ENCODE measurements at regions of chr13 and their contacts with region 1.

Region 1: DNA sequence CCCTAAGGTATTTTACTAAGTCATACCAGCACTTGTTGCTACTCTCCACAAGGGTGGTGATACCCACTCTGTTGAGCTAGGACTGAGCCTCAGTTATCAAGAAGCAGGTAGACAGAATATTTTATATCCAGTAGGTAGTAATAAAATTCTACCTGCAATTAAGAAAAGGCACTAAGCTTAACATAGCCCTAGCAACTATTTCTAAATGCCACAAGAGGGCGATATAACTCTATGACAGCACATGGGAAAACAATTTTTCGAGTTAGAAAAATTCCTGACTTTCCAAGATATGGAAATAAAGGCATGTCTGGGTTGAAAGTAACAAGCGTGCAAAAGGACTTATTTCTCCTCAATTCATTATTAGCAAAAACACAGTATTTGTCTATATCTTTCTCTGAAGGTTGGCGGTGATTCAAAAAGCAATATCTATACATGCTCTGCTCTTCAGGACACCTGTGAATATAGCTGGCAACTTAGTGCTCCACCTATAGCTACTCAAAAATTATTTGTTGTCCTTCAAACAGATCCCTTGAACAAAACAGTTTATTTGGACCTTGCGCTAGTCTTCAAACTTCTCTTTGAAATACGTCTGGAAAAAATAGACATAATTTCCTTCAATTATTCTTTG is 14.7 kb downstream of the CCDC169 start:
- DNase-seq: no peak
- ATAC-seq: peak; percentile 61

Region 2: GRCh38 chr13:36346222-36347083 is 63.5 kb after region 1 on chr13 and contains the start of gene SPART:
- intact Hi-C with region 1: no loop called
- DNase-seq: peak; percentile 88 to 91
- ATAC-seq: peak; percentile 95
- total RNA-seq, gene SPART: 9.5 to 14.0 TPM

Region 3: DNA sequence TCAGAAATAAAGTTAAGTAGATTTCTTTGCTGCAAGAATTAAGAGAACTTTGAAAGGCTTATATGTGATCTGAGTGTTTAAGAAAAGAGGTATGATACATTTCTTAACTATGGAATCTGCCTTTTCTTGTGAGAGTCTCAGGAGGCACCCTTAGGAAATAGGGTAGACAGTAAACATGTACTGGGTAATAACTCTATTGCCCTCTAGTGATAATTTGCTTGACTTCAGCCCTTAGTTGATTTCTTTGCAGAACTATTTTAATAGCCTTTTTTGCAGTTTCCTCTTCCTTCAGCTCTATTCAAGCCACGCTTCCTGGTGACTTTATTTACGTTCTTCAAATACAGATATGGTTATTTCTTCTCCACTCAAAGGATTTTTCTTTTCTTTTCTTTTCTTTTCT is 112.3 kb after region 1 on chr13:
- intact Hi-C with region 1: loop called in 1 of 2 experiments (anchors 10 kb)
- DNase-seq: no peak
- ATAC-seq: no peak

Region 4: DNA sequence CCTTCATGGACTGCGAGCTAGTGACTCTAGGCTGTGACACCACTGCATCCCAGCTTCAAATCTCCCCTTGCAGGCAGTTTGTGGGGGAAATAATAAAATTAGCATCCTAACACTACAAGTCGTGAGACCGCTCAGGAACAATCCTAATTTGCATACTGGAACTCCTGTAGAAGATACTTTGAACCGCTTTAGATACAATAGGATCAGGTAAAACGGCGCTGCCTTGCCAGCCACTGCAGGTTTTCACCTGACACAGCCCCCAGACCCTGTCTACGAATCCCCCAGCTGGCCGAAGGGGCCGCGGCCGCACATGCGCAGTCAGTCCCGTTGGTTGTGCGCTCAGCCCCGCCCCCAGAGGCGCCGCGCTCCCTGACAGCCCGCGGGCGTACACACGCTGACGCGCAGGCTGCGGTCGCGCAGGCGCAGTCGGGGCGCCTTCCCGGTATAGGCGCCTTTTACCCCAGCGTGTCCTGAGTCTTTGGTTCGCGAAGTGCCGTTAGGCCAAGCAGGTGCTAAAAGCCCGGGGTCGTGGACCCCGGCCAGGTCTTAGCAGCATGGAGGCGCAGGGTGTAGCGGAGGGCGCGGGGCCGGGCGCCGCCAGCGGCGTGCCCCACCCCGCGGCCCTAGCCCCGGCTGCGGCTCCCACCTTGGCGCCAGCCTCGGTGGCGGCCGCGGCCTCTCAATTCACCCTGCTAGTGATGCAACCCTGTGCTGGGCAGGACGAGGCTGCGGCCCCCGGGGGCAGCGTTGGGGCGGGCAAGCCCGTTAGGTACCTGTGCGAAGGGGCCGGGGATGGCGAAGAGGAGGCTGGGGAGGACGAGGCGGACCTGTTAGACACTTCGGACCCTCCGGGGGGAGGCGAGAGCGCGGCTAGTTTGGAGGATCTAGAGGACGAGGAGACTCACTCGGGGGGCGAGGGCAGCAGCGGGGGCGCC is 536.1 kb after region 1 on chr13 and contains the start of gene RFXAP:
- intact Hi-C with region 1: no loop called
- DNase-seq: peak; percentile 82 to 93
- ATAC-seq: peak; percentile 98
- total RNA-seq, gene RFXAP: 2.9 to 3.4 TPM